Heart right ventricle (tissue), 16 donors: ENCODE measurements at regions of chr1 and their contacts with region 1.

Region 1: DNA sequence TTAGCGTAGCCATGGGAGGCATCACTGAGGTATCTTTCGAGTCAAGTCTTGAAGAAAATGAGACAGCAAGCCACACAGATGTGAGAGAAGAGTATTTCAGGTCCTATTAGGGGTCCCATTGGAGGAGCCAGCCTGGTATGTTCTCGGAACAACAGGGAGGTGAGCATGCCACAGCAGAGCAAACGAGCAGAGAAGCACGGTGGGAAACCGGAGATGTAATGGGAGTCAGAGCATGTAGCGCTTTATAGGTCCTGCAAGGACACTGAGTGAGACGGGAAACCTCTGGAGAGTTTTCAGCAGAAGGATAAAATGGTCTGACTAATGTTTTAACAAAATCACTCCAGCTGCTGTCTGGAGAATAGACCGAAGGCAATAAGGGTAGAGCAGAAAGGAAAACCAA is 15.9 kb downstream of the H3-3A start:
- DNase-seq: no peak
- ATAC-seq: no peak
- H3K4me3 ChIP-seq: no peak overlapping the region
- H3K27ac ChIP-seq: no peak overlapping the region
- H3K4me1 ChIP-seq: peaks cover 0 to 10% (median 7%) of the 10 kb centered on the region in 9 donors
- H3K27me3 ChIP-seq: no peaks in the 10 kb centered on the region
- CTCF ChIP-seq: no peak

Region 2: DNA sequence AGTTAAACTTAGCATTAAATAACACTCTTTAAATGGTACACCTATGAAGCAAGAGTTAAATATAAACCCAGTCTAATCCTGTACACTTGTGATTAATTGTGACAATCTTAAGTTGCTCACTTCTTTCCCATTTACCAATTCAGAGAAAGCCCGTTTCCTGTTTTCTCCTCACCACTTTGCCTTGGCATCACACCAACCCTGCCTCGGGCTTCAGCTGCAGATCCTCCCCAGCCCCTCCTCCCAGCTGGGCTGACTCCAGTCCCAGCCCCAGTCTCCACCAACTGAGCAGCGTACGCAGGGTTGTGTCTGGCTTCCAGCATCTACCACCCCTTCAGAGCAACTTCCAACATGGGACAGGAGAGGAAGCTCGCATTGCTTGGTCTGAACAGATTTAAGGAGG is 158.5 kb before region 1 on chr1:
- intact Hi-C with region 1: no loop called
- DNase-seq: peak; percentile 67 to 69
- ATAC-seq: peak in 2 of 8 donors; percentile 11 to 15
- H3K4me3 ChIP-seq: no peak overlapping the region
- H3K27ac ChIP-seq: peak overlapping the region in 4 of 10 donors; percentile 7 to 49 (median 30)
- H3K4me1 ChIP-seq: peaks cover 5 to 43% (median 27%) of the 10 kb centered on the region in 9 donors
- H3K27me3 ChIP-seq: no peaks in the 10 kb centered on the region
- CTCF ChIP-seq: no peak

Region 3: GRCh38 chr1:226100436-226101391 is 22.3 kb after region 1 on chr1:
- intact Hi-C with region 1: loop called in 1 of 10 experiments (anchors 2 kb)
- DNase-seq: peak; percentile 23 to 47
- ATAC-seq: peak in 7 of 8 donors; percentile 12 to 79 (median 68)
- H3K4me3 ChIP-seq: peak overlapping the region in 9 of 10 donors; percentile 27 to 60 (median 50)
- H3K27ac ChIP-seq: peak overlapping the region in 2 of 10 donors; percentile 29 to 35
- H3K4me1 ChIP-seq: peaks cover 0 to 15% (median 8%) of the 10 kb centered on the region in 9 donors
- H3K27me3 ChIP-seq: no peaks in the 10 kb centered on the region
- CTCF ChIP-seq: no peak

Region 4: GRCh38 chr1:226474443-226475141 is 396.2 kb after region 1 on chr1:
- intact Hi-C with region 1: no loop called
- DNase-seq: no peak
- ATAC-seq: peak in 4 of 8 donors; percentile 11 to 38 (median 26)
- H3K4me3 ChIP-seq: no peak overlapping the region
- H3K27ac ChIP-seq: no peak overlapping the region
- H3K4me1 ChIP-seq: peaks cover 0 to 11% (median 0%) of the 10 kb centered on the region in 9 donors
- H3K27me3 ChIP-seq: peaks cover 0 to 4% (median 0%) of the 10 kb centered on the region in 7 donors
- CTCF ChIP-seq: no peak